ENCODE measurements at regions of chrX and their contacts with region 1.

Region 1: DNA sequence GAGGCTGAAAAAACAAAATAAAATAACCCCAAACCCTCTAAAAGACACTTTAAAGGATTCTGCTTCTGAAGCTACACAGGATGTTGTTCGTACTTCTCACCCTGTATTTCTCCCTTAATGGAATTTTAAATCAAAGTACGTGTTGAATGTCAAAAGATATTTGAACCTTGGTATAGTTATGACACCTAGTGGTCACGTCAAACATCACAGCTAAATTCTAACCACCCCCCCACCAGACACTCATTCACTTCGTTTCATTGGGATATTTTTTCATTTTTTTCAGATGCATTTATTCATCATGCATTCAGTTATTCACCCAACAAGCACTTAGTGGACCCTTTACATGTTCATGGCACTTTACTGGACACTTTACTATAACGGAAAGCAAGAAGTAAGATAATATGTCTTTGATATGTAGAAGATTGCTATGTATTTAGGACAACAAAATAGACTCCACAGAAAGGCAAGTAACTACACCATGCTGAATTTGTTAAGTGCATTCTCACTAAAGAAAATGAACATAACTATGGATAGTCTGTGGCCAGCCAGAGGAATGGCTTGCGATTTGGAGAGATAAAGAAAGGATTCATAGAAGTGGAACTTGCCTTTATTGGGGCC is 62.5 kb upstream of the GPR174 start:
- DNase-seq: peak; percentile 69
- ATAC-seq: peak; percentile 78
- H3K4me3 ChIP-seq: peak overlapping the region in 2 of 5 experiments; percentile 12 to 26
- H3K4me3 Mint-ChIP-seq: peak overlapping the region; percentile 55
- H3K27ac ChIP-seq: peak overlapping the region in 1 of 2 donors; percentile 32
- H3K27ac Mint-ChIP-seq: peak overlapping the region; percentile 51
- H3K4me1 ChIP-seq: peaks cover 4 to 9% of the 10 kb centered on the region in 2 donors
- H3K4me1 Mint-ChIP-seq: peaks cover 10% of the 10 kb centered on the region
- H3K27me3 ChIP-seq: no peaks in the 10 kb centered on the region
- H3K27me3 Mint-ChIP-seq: no peaks in the 10 kb centered on the region
- CTCF ChIP-seq: peak; percentile 70

Region 2: DNA sequence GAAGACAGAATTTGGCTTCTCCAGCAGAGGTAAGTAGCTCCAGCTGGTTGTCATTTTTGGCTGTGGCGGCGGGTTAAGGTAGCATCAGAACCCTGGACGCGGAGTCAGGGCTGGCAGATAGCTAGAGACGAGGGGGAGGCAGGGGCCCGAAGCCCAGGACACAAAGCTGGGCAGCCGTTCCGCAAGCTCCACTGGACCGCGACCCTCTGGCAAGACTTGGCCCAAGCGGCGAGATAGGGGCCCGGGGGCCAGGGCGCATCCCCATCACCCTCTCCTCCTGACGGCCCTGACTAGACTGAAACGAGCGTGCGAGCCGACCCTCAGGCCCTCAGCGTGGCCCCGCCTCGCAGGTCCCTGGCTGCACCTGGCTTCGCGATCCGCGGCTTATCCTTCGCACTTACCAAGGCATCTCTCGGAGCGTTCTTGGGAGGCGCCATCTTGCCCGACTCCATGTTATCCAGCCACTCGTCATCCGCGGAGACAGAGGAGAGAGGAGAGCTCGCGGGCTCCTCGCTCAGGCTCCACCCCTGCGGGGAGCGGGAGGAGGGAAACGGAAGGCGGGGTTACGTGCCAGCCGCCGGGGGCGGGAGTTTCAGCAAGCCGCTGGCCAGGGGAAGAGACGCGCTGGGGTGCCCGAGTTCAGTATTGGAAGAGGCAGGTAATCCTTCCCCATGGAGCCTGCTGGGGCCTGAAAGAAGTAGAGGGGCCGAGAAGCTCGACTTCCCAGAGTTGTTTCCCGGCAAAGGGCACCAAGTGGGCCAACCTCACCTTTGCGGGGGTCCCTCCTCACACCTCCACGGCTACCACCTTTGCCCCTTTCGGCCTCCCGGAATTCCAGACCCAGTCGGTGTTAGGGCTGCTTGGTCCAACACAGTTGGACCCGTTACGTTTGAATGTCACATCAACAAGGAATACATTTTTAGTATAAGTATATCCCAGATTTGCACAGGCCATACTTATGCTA is 942.6 kb before region 1 on chrX and contains the start of gene TAF9B:
- CTCF ChIA-PET with region 1: no interaction called
- POLR2A ChIA-PET with region 1: no interaction called
- intact Hi-C with region 1: loop called (anchors 10 kb)
- DNase-seq: peak; percentile 77
- ATAC-seq: peak; percentile 95
- H3K4me3 ChIP-seq: peak within 1 kb of the TSS; percentile 34 to 83 (median 77)
- H3K4me3 Mint-ChIP-seq: peak within 1 kb of the TSS; percentile 95
- H3K27ac ChIP-seq: peak within 1 kb of the TSS; percentile 44 to 71
- H3K27ac Mint-ChIP-seq: peak within 1 kb of the TSS; percentile 90
- H3K4me1 ChIP-seq: peaks cover 0 to 3% of the 10 kb centered on the region in 2 donors
- H3K4me1 Mint-ChIP-seq: peaks cover 6% of the 10 kb centered on the region
- H3K27me3 ChIP-seq: no peaks in the 10 kb centered on the region
- H3K27me3 Mint-ChIP-seq: no peaks in the 10 kb centered on the region
- CTCF ChIP-seq: no peak
- total RNA-seq, gene TAF9B: 12.2 and 13.7 TPM in 2 replicates

Region 3: GRCh38 chrX:78957768-78958130 is 124.3 kb before region 1 on chrX:
- CTCF ChIA-PET with region 1: interaction called, 15 read pairs
- POLR2A ChIA-PET with region 1: no interaction called
- intact Hi-C with region 1: no loop called
- DNase-seq: no peak
- ATAC-seq: peak; percentile 85
- H3K4me3 ChIP-seq: peak overlapping the region in 2 of 5 experiments; percentile 5 to 12
- H3K4me3 Mint-ChIP-seq: peak overlapping the region; percentile 85
- H3K27ac ChIP-seq: peak overlapping the region; percentile 43 to 75
- H3K27ac Mint-ChIP-seq: peak overlapping the region; percentile 90
- H3K4me1 ChIP-seq: peaks cover 60 to 64% of the 10 kb centered on the region in 2 donors
- H3K4me1 Mint-ChIP-seq: peaks cover 76% of the 10 kb centered on the region
- H3K27me3 ChIP-seq: no peaks in the 10 kb centered on the region
- H3K27me3 Mint-ChIP-seq: no peaks in the 10 kb centered on the region
- CTCF ChIP-seq: no peak

Region 4: GRCh38 chrX:80841259-80841658 is 1759.3 kb after region 1 on chrX:
- CTCF ChIA-PET with region 1: no interaction called
- POLR2A ChIA-PET with region 1: no interaction called
- intact Hi-C with region 1: no loop called
- DNase-seq: no peak
- ATAC-seq: no peak
- H3K4me3 ChIP-seq: no peak overlapping the region
- H3K4me3 Mint-ChIP-seq: no peak overlapping the region
- H3K27ac ChIP-seq: no peak overlapping the region
- H3K27ac Mint-ChIP-seq: no peak overlapping the region
- H3K4me1 ChIP-seq: no peaks in the 10 kb centered on the region
- H3K4me1 Mint-ChIP-seq: no peaks in the 10 kb centered on the region
- H3K27me3 ChIP-seq: no peaks in the 10 kb centered on the region
- H3K27me3 Mint-ChIP-seq: no peaks in the 10 kb centered on the region
- CTCF ChIP-seq: no peak